ENCODE measurements at regions of chr9 and their contacts with region 1.

Region 1: GRCh38 chr9:37994639-37995347 is 74.2 kb downstream of the SHB start:
- DNase-seq: peak; percentile 83 to 93 (median 92)
- ATAC-seq: peak; percentile 86 to 87
- H3K4me3 ChIP-seq: no peak overlapping the region
- H3K27ac ChIP-seq: peak overlapping the region; percentile 87
- H3K4me1 ChIP-seq: peaks cover 23% of the 10 kb centered on the region
- H3K27me3 ChIP-seq: no peaks in the 10 kb centered on the region

Region 2: GRCh38 chr9:37920471-37921167 is 74.2 kb before region 1 on chr9:
- intact Hi-C with region 1: loop called in 2 of 4 experiments (anchors 5 kb)
- DNase-seq: no peak
- ATAC-seq: no peak
- H3K4me3 ChIP-seq: no peak overlapping the region
- H3K27ac ChIP-seq: no peak overlapping the region
- H3K4me1 ChIP-seq: no peaks in the 10 kb centered on the region
- H3K27me3 ChIP-seq: no peaks in the 10 kb centered on the region

Region 3: GRCh38 chr9:37938121-37938891 is 56.5 kb before region 1 on chr9:
- intact Hi-C with region 1: loop called in 1 of 4 experiments (anchors 10 kb)
- DNase-seq: peak; percentile 53 to 71 (median 58)
- ATAC-seq: peak; percentile 36 to 84
- H3K4me3 ChIP-seq: no peak overlapping the region
- H3K27ac ChIP-seq: peak overlapping the region; percentile 71
- H3K4me1 ChIP-seq: peaks cover 19% of the 10 kb centered on the region
- H3K27me3 ChIP-seq: no peaks in the 10 kb centered on the region

Region 4: DNA sequence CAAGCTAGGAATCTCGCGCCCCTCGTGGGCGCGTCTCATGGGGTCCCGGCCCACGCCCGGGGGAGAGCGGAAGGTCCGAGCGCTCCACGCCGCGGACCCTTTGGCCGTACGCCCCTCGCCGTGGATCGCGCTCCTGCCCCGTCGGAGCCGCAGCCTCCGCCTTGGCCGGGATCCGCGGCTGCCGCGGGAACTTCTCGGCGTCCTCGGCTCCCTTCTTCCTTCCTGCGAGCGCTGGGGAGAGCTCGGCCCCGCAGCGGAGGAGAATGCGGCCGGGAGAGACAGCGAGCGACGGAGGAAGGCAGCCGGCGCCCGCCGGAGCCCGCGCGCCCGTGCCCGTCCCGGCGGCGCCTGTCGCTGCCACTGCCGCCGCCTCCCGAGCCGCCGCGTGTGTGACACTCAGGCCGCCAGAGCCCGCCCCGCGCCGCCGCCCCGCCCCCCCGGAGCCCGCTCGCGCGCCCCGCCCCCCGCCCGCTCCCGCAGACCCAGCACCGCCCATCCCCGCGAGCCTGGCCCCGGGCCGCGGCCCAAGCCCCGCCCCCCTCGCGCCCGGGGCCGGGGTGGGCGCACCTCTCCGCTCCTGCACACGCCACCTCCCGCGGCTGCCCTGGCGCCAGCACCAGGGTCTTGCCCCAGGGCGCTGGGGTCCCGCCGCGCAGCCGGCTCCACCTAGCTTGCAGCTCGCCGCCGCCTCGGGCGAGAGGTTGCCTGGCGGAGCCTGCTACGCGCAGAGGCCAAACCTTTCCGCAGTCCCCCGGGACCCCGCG is 74.3 kb after region 1 on chr9 and contains the start of gene SHB:
- intact Hi-C with region 1: loop called in 1 of 4 experiments (anchors 5 kb)
- DNase-seq: peak; percentile 84 to 94 (median 94)
- ATAC-seq: peak; percentile 80 to 85
- H3K4me3 ChIP-seq: peak within 1 kb of the TSS; percentile 69
- H3K27ac ChIP-seq: peak within 1 kb of the TSS; percentile 87
- H3K4me1 ChIP-seq: peaks cover 4% of the 10 kb centered on the region
- H3K27me3 ChIP-seq: no peaks in the 10 kb centered on the region
- total RNA-seq, gene SHB: 25.7 to 38.9 (median 31.0) TPM

Region 5: DNA sequence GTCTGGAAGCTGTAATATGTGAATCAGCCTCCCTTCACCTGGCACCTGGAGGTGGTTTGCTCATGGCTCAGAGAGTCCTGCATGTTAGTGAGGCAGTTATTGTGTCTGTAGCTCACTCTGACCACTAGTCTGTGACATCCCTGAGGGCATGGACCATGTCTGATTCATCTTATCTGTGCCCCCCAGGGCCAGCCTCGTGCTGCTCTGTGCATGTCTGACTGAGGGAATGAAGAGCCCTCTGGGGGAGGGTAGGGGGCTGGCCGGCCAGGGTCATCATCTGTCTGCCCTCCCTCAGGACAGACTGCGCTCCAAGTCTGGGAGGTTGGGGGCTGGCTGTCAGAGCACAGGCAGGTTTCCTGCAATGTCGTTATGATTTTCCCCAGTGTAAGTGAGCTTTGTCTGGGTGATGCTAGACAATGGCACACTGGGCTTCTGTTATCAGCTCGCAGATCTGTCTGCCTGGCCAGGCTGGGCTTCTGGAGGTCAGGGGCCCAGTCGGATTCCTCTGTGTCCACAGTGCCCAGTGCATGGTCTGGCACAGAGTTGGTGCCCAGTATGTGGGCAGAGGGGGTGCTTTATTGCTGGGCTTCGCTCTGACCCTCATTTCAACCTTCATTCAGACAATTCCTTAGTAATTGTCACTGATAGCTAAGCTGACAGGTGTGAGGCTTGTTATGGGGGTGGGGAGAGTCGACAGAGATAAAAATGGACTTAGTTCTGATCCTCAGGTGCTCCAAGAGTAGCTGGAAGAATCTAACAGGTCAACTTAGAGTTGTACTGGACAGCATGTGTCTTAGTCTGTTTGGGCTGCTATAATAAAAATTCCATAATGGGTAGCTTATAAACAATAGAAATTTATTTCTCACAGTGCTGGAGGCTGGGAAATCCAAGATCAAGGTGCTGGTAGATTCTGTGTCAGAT is 160.0 kb after region 1 on chr9:
- intact Hi-C with region 1: loop called in 1 of 4 experiments (anchors 10 kb)
- DNase-seq: no peak
- ATAC-seq: no peak
- H3K4me3 ChIP-seq: no peak overlapping the region
- H3K27ac ChIP-seq: no peak overlapping the region
- H3K4me1 ChIP-seq: no peaks in the 10 kb centered on the region
- H3K27me3 ChIP-seq: no peaks in the 10 kb centered on the region